SK-N-SH (cell line): ENCODE measurements at regions of chr4 and their contacts with region 1.

Region 1: GRCh38 chr4:48779998-48780742 is at the start of gene FRYL:
- DNase-seq: peak; percentile 91
- H3K4me3 ChIP-seq: peak within 1 kb of the TSS; percentile 92
- H3K27ac ChIP-seq: peak within 1 kb of the TSS; percentile 93 to 94
- H3K4me1 ChIP-seq: peaks cover 16 to 17% of the 10 kb centered on the region in 2 experiments; a peak in 3 of 4 replicates
- H3K27me3 ChIP-seq: no peaks in the 10 kb centered on the region
- CTCF ChIP-seq: no peak
- EP300 ChIP-seq: no peak
- RAD21 ChIP-seq: peak; percentile 9; the same call in 1 of the 2 replicates
- polyA plus RNA-seq, gene FRYL: 8.2 and 10.2 TPM in 2 replicates

Region 2: GRCh38 chr4:48518143-48518542 is 262.0 kb before region 1 on chr4:
- CTCF ChIA-PET with region 1: no interaction called
- POLR2A ChIA-PET with region 1: no interaction called
- DNase-seq: no peak
- H3K4me3 ChIP-seq: no peak overlapping the region
- H3K27ac ChIP-seq: no peak overlapping the region
- H3K4me1 ChIP-seq: no peaks in the 10 kb centered on the region
- H3K27me3 ChIP-seq: no peaks in the 10 kb centered on the region
- CTCF ChIP-seq: no peak
- EP300 ChIP-seq: no peak
- RAD21 ChIP-seq: no peak

Region 3: DNA sequence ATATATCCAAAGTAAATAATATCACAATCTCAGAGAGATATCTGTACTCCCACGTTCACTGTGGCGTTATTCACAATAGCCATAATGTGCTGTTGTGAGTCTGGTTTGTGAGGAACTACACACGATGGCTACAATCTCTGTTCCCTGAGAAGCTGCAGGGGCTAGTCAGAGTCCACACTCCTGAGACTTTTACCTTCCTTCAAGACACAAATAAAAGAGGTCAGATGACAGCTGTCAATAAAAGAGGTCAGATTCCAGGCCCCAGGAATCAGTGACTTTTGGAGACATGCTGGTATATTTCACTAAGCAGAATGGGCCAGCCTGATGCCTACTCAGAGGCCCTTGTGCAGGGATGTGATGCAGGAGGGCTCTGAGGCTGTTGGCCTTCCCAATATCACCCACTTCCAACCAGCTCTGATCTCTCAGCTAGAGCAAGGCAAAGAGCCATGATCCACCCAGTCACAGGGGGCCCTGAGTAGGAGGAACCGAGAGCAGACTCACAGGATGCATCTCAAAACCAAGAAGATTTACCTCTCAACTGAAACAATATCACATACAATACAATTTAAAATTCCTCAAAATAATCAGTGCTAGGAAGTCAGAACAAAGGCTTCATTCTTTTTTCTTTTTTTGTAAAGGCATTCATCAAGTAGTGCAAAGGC is 13.9 kb before region 1 on chr4:
- CTCF ChIA-PET with region 1: interaction called, 15 read pairs
- POLR2A ChIA-PET with region 1: interaction called, 4 read pairs
- DNase-seq: no peak
- H3K4me3 ChIP-seq: no peak overlapping the region
- H3K27ac ChIP-seq: no peak overlapping the region
- H3K4me1 ChIP-seq: no peaks in the 10 kb centered on the region
- H3K27me3 ChIP-seq: no peaks in the 10 kb centered on the region
- CTCF ChIP-seq: no peak
- EP300 ChIP-seq: no peak
- RAD21 ChIP-seq: no peak

Region 4: GRCh38 chr4:48963042-48963679 is 183.0 kb after region 1 on chr4:
- CTCF ChIA-PET with region 1: interaction called, 10 read pairs
- POLR2A ChIA-PET with region 1: no interaction called
- DNase-seq: peak; percentile 60
- H3K4me3 ChIP-seq: no peak overlapping the region; a peak in 1 of 4 replicates
- H3K27ac ChIP-seq: no peak overlapping the region
- H3K4me1 ChIP-seq: no peaks in the 10 kb centered on the region
- H3K27me3 ChIP-seq: no peaks in the 10 kb centered on the region
- CTCF ChIP-seq: peak; percentile 100
- EP300 ChIP-seq: no peak
- RAD21 ChIP-seq: peak; percentile 97